A673 (cell line): ENCODE measurements at regions of chr9 and their contacts with region 1.

Region 1: GRCh38 chr9:115192835-115193525 is 75.0 kb upstream of the TNC start:
- DNase-seq: no peak
- H3K4me3 ChIP-seq: no peak overlapping the region
- H3K27ac ChIP-seq: no peak overlapping the region
- H3K4me1 ChIP-seq: peaks cover 39% of the 10 kb centered on the region
- H3K27me3 ChIP-seq: no peaks in the 10 kb centered on the region
- CTCF ChIP-seq: no peak

Region 2: GRCh38 chr9:114718801-114719221 is 474.2 kb before region 1 on chr9:
- CTCF ChIA-PET with region 1: no interaction called
- POLR2A ChIA-PET with region 1: no interaction called
- intact Hi-C with region 1: no loop called
- DNase-seq: no peak
- H3K4me3 ChIP-seq: no peak overlapping the region
- H3K27ac ChIP-seq: no peak overlapping the region
- H3K4me1 ChIP-seq: peaks cover 4% of the 10 kb centered on the region
- H3K27me3 ChIP-seq: no peaks in the 10 kb centered on the region
- CTCF ChIP-seq: no peak

Region 3: DNA sequence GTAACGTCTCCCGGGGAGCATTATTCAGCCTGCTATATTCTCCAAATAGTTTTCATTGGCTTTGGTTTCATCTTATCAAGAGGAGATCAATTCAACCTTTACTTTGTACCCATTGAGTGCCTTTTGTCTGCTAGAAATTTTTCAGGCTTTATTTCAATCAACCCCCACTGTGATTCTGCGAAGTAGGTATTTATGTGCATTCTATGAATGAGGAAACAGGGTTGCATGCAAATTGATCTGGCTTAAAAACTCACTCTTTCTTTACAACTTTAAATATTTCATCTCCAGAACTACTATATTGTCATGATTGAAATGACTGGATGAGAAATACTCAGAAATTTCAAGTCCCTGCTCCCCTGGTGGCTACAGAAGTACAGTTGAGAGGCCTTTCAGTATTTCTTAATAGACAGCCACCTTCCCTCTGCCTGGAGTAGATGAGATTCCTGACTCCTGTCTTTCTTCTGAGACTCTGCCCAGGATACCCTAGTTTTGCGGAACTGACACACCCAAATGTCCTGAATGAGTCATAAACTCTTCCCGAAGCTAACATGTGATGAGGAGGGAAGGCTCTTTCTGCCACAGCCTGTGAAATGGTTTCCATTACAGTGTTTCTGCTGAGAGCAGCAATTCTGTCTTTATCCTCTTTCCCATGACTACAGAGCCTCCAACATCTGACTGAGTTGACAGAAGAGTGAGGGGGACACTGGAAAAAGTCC is 22.5 kb before region 1 on chr9:
- CTCF ChIA-PET with region 1: no interaction called
- POLR2A ChIA-PET with region 1: no interaction called
- intact Hi-C with region 1: no loop called
- DNase-seq: peak; percentile 62
- H3K4me3 ChIP-seq: no peak overlapping the region
- H3K27ac ChIP-seq: no peak overlapping the region
- H3K4me1 ChIP-seq: peaks cover 10% of the 10 kb centered on the region
- H3K27me3 ChIP-seq: no peaks in the 10 kb centered on the region
- CTCF ChIP-seq: no peak

Region 4: DNA sequence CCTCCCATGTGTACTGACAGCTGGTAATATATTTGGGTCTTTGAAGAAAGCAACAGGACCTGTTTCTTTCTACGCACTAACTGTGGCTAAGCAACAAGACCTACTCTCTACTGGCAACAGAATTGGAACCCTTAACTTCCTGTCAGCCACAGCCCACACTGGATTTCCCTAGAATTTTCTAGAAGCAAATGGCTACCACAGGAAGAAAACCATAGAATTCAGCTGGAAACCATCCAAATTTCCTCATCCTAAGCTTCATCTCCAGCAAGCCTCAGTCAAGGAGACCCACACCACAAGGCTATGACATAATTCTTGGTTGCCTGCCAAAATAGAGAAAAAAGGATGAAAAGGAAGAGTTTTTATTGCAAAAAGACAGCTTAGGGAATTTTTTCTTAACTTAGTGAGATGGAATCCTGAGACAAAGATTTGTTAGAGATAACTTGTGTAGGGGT is 96.8 kb after region 1 on chr9:
- CTCF ChIA-PET with region 1: no interaction called
- POLR2A ChIA-PET with region 1: no interaction called
- intact Hi-C with region 1: no loop called
- DNase-seq: peak; percentile 94
- H3K4me3 ChIP-seq: no peak overlapping the region
- H3K27ac ChIP-seq: no peak overlapping the region
- H3K4me1 ChIP-seq: peaks cover 13% of the 10 kb centered on the region
- H3K27me3 ChIP-seq: no peaks in the 10 kb centered on the region
- CTCF ChIP-seq: no peak

Region 5: DNA sequence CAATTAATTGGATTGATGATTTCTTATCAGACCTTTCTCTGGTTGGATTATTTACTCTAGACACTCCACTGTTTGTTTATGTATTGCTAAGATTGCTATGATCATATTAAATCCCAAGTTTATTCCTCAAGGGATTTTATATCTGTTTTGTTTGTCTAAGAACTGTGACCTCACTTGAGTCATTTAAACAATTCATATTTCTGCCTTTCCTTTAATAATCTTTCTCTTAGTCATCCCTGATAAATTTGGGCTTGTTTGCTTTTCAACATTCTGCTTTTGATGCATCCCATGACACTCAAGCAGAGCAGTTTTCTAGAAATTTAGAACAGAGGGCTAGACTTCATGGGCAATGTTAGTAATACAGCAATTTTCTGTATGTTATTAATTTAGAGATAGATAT is 156.5 kb after region 1 on chr9:
- CTCF ChIA-PET with region 1: interaction called, 11 read pairs
- POLR2A ChIA-PET with region 1: no interaction called
- intact Hi-C with region 1: no loop called
- DNase-seq: no peak
- H3K4me3 ChIP-seq: no peak overlapping the region
- H3K27ac ChIP-seq: no peak overlapping the region
- H3K4me1 ChIP-seq: no peaks in the 10 kb centered on the region
- H3K27me3 ChIP-seq: no peaks in the 10 kb centered on the region
- CTCF ChIP-seq: no peak

Region 6: GRCh38 chr9:115808108-115808507 is 615.1 kb after region 1 on chr9:
- CTCF ChIA-PET with region 1: no interaction called
- POLR2A ChIA-PET with region 1: no interaction called
- intact Hi-C with region 1: no loop called
- DNase-seq: no peak
- H3K4me3 ChIP-seq: no peak overlapping the region
- H3K27ac ChIP-seq: no peak overlapping the region
- H3K4me1 ChIP-seq: no peaks in the 10 kb centered on the region
- H3K27me3 ChIP-seq: no peaks in the 10 kb centered on the region
- CTCF ChIP-seq: no peak